ENCODE measurements at regions of chr4 and their contacts with region 1.

Region 1: GRCh38 chr4:153221783-153222706 is 17.8 kb downstream of the TRIM2 start:
- DNase-seq: peak in 1 of 2 donors; percentile 83
- H3K4me3 ChIP-seq: peak overlapping the region; percentile 63 to 82
- H3K27ac ChIP-seq: peak overlapping the region; percentile 90 to 94
- H3K4me1 ChIP-seq: peaks cover 0 to 10% of the 10 kb centered on the region in 2 donors
- H3K27me3 ChIP-seq: no peaks in the 10 kb centered on the region
- CTCF ChIP-seq: no peak

Region 2: GRCh38 chr4:153153339-153153871 is 68.6 kb before region 1 on chr4:
- intact Hi-C with region 1: loop called (anchors 2 kb)
- DNase-seq: peak in 1 of 2 donors; percentile 72
- H3K4me3 ChIP-seq: peak overlapping the region; percentile 70 to 75
- H3K27ac ChIP-seq: peak overlapping the region; percentile 66 to 70
- H3K4me1 ChIP-seq: peaks cover 3 to 6% of the 10 kb centered on the region in 2 donors
- H3K27me3 ChIP-seq: no peaks in the 10 kb centered on the region
- CTCF ChIP-seq: no peak

Region 3: DNA sequence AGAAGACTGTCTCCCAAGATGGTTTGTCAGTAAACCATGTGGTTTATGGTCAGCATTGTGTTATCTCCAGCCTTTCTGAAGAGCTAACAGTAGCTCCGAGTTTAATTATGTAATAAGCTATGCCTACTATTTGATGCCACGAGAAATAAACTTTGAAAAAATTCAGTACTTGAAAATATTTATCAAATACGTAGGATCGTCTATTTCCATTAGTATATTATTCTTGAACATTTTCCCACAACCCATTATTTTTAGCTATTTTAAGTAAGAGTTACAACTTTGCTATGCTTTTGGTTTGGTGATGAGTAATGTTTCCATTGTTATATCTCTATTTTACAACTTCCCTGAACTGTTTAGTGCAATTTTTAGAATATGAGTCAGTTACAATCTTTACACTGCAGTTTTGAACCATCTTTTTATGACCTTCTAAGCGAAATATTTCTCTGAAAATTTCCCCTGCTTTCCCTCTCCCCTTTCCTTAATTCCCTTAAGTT is 62.3 kb before region 1 on chr4:
- intact Hi-C with region 1: loop called (anchors 1 kb)
- DNase-seq: no peak
- H3K4me3 ChIP-seq: no peak overlapping the region
- H3K27ac ChIP-seq: peak overlapping the region; percentile 34 to 36
- H3K4me1 ChIP-seq: peaks cover 0 to 2% of the 10 kb centered on the region in 2 donors
- H3K27me3 ChIP-seq: no peaks in the 10 kb centered on the region
- CTCF ChIP-seq: no peak

Region 4: GRCh38 chr4:153249199-153250041 is 27.4 kb after region 1 on chr4:
- intact Hi-C with region 1: loop called (anchors 2 kb)
- DNase-seq: peak in 1 of 2 donors; percentile 84
- H3K4me3 ChIP-seq: peak overlapping the region; percentile 65 to 67
- H3K27ac ChIP-seq: peak overlapping the region in 1 of 2 donors; percentile 35
- H3K4me1 ChIP-seq: peaks cover 0 to 2% of the 10 kb centered on the region in 2 donors
- H3K27me3 ChIP-seq: no peaks in the 10 kb centered on the region
- CTCF ChIP-seq: no peak

Region 5: DNA sequence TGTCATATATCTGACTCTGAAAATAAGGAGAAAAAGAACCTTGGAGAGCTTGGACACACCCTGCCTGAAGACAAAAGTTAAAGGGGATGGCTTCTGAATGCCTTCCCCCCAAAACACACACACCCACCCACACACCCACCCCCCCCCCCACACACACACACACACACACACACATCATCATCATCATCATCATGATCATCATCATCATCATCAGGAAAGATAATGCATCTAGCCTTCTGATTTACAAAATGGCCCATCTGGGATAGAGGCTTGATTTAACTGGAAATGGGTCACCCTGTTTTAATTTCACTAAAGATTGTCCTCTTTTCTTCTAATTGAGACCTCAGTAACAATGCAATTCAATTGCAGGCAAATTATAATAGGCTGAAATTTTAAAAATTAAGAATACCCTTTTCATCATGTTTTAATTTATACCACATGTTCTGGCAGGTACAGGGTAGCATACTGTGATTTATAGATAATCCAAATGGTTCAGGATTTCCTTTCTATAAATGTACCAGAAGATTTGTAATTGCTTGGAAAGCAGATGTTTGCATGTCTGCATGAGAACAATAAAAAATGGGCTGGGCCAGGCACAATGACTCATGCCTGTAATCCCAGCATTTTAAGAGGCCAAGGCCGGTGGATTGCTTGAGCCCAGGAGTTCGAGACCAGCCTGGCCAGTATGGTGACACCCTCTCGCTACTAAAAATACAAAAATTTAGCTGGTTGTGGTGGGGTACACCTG is 38.7 kb after region 1 on chr4:
- intact Hi-C with region 1: no loop called
- DNase-seq: no peak
- H3K4me3 ChIP-seq: no peak overlapping the region
- H3K27ac ChIP-seq: no peak overlapping the region
- H3K4me1 ChIP-seq: no peaks in the 10 kb centered on the region
- H3K27me3 ChIP-seq: no peaks in the 10 kb centered on the region
- CTCF ChIP-seq: no peak

Region 6: GRCh38 chr4:153318696-153319320 is 96.8 kb after region 1 on chr4:
- intact Hi-C with region 1: loop called (anchors 5 kb)
- DNase-seq: no peak
- H3K4me3 ChIP-seq: no peak overlapping the region
- H3K27ac ChIP-seq: no peak overlapping the region
- H3K4me1 ChIP-seq: no peaks in the 10 kb centered on the region
- H3K27me3 ChIP-seq: no peaks in the 10 kb centered on the region
- CTCF ChIP-seq: peak; percentile 52 to 63 (median 60)